GM12878 (cell line): ENCODE measurements at regions of chr11 and their contacts with region 1.

Region 1: DNA sequence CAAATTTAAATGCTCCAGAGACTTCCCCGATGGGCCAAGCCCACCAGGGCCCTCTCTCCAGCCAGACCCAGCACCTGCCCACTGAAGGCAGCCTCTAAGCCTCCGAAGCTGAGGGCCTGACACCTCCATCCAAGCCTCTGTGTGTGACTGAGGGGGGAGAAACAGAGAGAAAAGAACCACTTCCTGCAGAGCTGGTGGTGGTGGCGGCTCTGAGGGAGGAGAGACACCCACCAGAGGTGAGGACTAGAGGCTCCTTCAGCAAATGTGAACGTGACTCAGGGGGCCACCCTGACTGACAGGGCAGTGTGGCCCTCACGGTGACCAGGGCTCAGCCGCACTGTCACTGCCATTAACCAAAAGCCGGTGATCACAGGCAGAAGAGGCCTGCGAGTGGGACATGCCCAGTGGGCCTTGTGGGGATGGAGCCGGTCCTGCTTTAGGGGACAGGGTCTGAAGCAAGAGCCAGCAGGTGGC is 31.0 kb upstream of the CD5 start:
- DNase-seq: no peak
- ATAC-seq: peak; percentile 88
- H3K4me3 ChIP-seq: no peak overlapping the region
- H3K27ac ChIP-seq: peak overlapping the region; percentile 81
- H3K4me1 ChIP-seq: peaks cover 18% of the 10 kb centered on the region
- H3K27me3 ChIP-seq: no peaks in the 10 kb centered on the region
- CTCF ChIP-seq: no peak
- EP300 ChIP-seq: 0 out of 4 replicates have a peak, but pooled peaks of 1 of the 2 experiments have one; percentile 24
- POLR2A ChIP-seq: peak; percentile 74
- RAD21 ChIP-seq: 0 out of 2 replicates have a peak, but pooled peaks have one; percentile 19

Region 2: GRCh38 chr11:61082062-61082870 is 11.0 kb after region 1 on chr11:
- CTCF ChIA-PET with region 1: interaction called, 12 read pairs
- POLR2A ChIA-PET with region 1: no interaction called
- RAD21 ChIA-PET with region 1: interaction called, 4 read pairs
- SMC1A ChIA-PET with region 1: interaction called, 4 read pairs
- in situ Hi-C with region 1: no loop called
- intact Hi-C with region 1: no loop called
- DNase-seq: no peak
- ATAC-seq: no peak
- H3K4me3 ChIP-seq: no peak overlapping the region
- H3K27ac ChIP-seq: no peak overlapping the region
- H3K4me1 ChIP-seq: no peaks in the 10 kb centered on the region
- H3K27me3 ChIP-seq: no peaks in the 10 kb centered on the region
- CTCF ChIP-seq: no peak
- EP300 ChIP-seq: no peak
- POLR2A ChIP-seq: no peak
- RAD21 ChIP-seq: no peak

Region 3: GRCh38 chr11:61091373-61092279 is 20.4 kb after region 1 on chr11:
- CTCF ChIA-PET with region 1: interaction called, 15 read pairs
- POLR2A ChIA-PET with region 1: interaction called, 4 read pairs
- RAD21 ChIA-PET with region 1: interaction called, 13 read pairs
- SMC1A ChIA-PET with region 1: interaction called, 14 read pairs
- in situ Hi-C with region 1: no loop called
- intact Hi-C with region 1: no loop called
- DNase-seq: no peak
- ATAC-seq: peak; percentile 65
- H3K4me3 ChIP-seq: peak overlapping the region; percentile 64
- H3K27ac ChIP-seq: peak overlapping the region; percentile 69
- H3K4me1 ChIP-seq: peaks cover 34% of the 10 kb centered on the region
- H3K27me3 ChIP-seq: no peaks in the 10 kb centered on the region
- CTCF ChIP-seq: no peak
- EP300 ChIP-seq: no peak
- POLR2A ChIP-seq: no peak
- RAD21 ChIP-seq: no peak

Region 4: GRCh38 chr11:61254403-61255025 is 183.3 kb after region 1 on chr11:
- CTCF ChIA-PET with region 1: no interaction called
- POLR2A ChIA-PET with region 1: no interaction called
- RAD21 ChIA-PET with region 1: no interaction called
- SMC1A ChIA-PET with region 1: no interaction called
- in situ Hi-C with region 1: no loop called
- intact Hi-C with region 1: no loop called
- DNase-seq: peak; percentile 25
- ATAC-seq: peak; percentile 99
- H3K4me3 ChIP-seq: no peak overlapping the region
- H3K27ac ChIP-seq: no peak overlapping the region
- H3K4me1 ChIP-seq: no peaks in the 10 kb centered on the region
- H3K27me3 ChIP-seq: no peaks in the 10 kb centered on the region
- CTCF ChIP-seq: peak; percentile 93 to 99 (median 96)
- EP300 ChIP-seq: no peak
- POLR2A ChIP-seq: no peak
- RAD21 ChIP-seq: peak; percentile 84